SK-N-SH (cell line): ENCODE measurements at regions of chr4 and their contacts with region 1.

Region 1: GRCh38 chr4:158172261-158173258 is at the start of gene GASK1B:
- DNase-seq: peak; percentile 47
- H3K4me3 ChIP-seq: peak within 1 kb of the TSS; percentile 19 to 33; a peak in 3 of 4 replicates
- H3K27ac ChIP-seq: no peak within 1 kb of the TSS
- H3K4me1 ChIP-seq: peaks cover 0 to 5% of the 10 kb centered on the region in 2 experiments; a peak in 2 of 4 replicates
- H3K27me3 ChIP-seq: no peaks in the 10 kb centered on the region
- CTCF ChIP-seq: peak; percentile 91
- EP300 ChIP-seq: no peak
- RAD21 ChIP-seq: peak; percentile 82
- polyA plus RNA-seq, gene GASK1B: 3.7 and 7.2 TPM in 2 replicates

Region 2: GRCh38 chr4:157973297-157973696 is 199.3 kb before region 1 on chr4:
- CTCF ChIA-PET with region 1: no interaction called
- POLR2A ChIA-PET with region 1: no interaction called
- DNase-seq: no peak
- H3K4me3 ChIP-seq: no peak overlapping the region
- H3K27ac ChIP-seq: no peak overlapping the region
- H3K4me1 ChIP-seq: no peaks in the 10 kb centered on the region; a peak in 1 of 4 replicates
- H3K27me3 ChIP-seq: no peaks in the 10 kb centered on the region
- CTCF ChIP-seq: no peak
- EP300 ChIP-seq: no peak
- RAD21 ChIP-seq: no peak

Region 3: DNA sequence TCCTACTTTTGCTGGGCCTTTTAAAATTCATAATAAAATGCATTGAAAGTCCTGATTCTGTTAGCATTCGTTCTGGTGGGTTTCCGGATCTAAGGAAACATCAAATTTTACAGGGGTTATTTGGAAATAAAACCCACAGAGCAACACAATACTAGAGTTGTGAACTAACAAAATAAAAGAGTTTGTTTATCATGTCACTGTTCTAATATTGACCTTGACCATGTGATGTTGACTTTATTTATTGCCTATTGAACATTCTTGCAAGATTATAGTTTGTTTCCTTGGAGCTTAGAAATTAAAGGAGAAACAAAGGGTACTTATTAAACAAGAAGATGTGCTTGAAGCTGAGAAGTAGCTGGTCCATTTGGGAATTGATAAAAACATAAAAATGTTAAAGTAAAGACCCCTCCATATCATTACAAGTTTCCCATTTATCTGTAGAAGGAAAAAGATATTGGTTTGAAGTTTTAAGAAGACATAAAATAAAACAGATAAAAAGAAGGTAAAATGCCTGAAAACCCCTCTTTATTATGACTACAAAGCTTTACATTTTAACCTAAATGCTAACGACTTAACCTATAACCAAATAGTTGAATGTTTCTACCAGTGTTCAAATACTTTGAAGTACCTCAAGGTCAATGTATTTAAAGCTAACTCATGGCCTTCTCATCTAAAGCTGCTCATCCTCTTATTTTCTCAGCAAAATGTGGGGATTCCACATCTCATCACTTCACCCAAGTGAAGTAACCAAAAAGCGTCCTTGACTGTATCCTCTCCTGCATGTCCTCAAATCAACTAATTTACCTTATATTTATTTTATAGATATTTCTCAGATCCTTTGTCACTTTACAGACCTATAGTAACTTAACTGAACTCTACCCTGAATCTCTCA is 179.4 kb before region 1 on chr4:
- CTCF ChIA-PET with region 1: interaction called, 11 read pairs
- POLR2A ChIA-PET with region 1: no interaction called
- DNase-seq: no peak
- H3K4me3 ChIP-seq: no peak overlapping the region
- H3K27ac ChIP-seq: no peak overlapping the region
- H3K4me1 ChIP-seq: peaks cover 0 to 6% of the 10 kb centered on the region in 2 experiments; a peak in 2 of 4 replicates
- H3K27me3 ChIP-seq: no peaks in the 10 kb centered on the region
- CTCF ChIP-seq: no peak
- EP300 ChIP-seq: no peak
- RAD21 ChIP-seq: no peak

Region 4: GRCh38 chr4:158182736-158183135 is 10.2 kb after region 1 on chr4:
- CTCF ChIA-PET with region 1: interaction called, 19 read pairs
- POLR2A ChIA-PET with region 1: no interaction called
- DNase-seq: peak; percentile 36
- H3K4me3 ChIP-seq: no peak overlapping the region; a peak in 1 of 4 replicates
- H3K27ac ChIP-seq: no peak overlapping the region
- H3K4me1 ChIP-seq: no peaks in the 10 kb centered on the region
- H3K27me3 ChIP-seq: no peaks in the 10 kb centered on the region
- CTCF ChIP-seq: no peak
- EP300 ChIP-seq: no peak
- RAD21 ChIP-seq: no peak